ENCODE measurements at regions of chr12 and their contacts with region 1.

Region 1: DNA sequence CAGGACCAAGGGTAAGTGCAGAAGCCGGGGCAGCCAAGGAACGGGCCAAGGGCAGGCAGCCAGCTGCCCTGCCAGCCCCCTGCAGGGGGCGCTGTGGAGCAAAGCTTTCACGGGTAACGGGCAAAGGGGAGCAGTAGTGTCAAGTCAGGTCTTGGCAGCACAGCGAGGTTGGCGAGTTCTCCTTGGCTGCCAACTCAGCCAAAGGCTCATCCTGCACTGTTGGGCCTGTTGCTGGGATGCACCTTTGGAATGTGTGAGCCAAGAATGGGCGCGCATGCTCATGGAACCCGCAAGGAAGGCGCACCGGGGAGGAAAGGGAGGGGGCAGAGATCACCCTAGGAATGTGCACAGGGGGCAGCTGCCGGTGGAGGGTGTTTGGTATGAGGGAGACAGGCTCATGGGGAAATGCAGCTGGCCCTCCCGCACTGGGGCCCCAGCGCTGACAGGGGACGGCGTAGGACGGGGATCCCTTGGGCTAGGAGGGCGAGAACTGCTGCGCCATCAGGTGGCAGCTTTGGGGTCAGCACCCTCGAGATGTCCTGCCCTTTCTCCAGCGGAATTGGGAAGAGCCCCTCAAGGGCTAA is 138.0 kb downstream of the ASCL4 start:
- DNase-seq: peak; percentile 55 to 73
- ATAC-seq: peak; percentile 75 to 93
- H3K4me3 ChIP-seq: peak overlapping the region; percentile 41
- H3K27ac ChIP-seq: no peak overlapping the region
- H3K4me1 ChIP-seq: no peaks in the 10 kb centered on the region
- CTCF ChIP-seq: peak; percentile 70
- EP300 ChIP-seq: no peak
- POLR2A ChIP-seq: no peak
- RAD21 ChIP-seq: peak in 1 of 2 experiments; percentile 11; a peak in 1 of 5 replicates

Region 2: DNA sequence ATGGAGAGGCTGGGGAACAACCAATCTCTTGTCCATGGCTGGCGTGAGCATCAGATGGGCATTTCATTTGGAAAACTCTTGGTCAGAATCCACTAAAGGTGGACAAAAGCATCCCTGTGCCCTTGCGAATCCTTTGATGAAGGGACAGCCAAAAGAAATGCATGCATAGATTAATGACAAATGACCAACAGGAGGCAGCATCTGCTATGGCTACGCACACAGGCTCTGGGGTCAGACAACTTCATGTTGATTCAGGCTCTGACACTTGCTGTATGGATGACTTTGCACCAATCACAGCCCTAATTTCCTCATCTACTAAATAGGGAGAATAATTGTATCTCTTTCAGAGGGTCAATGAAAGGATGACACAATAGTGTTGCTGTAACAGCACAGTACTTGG is 20.5 kb before region 1 on chr12:
- CTCF ChIA-PET with region 1: interaction called, 16 read pairs
- POLR2A ChIA-PET with region 1: no interaction called
- DNase-seq: peak in 1 of 2 experiments; percentile 24
- ATAC-seq: peak in 1 of 2 experiments; percentile 56; a peak in 3 of 6 replicates
- H3K4me3 ChIP-seq: no peak overlapping the region
- H3K27ac ChIP-seq: no peak overlapping the region
- H3K4me1 ChIP-seq: no peaks in the 10 kb centered on the region
- CTCF ChIP-seq: no peak; the same call in 2 of the 3 replicates
- EP300 ChIP-seq: no peak
- POLR2A ChIP-seq: no peak
- RAD21 ChIP-seq: no peak

Region 3: DNA sequence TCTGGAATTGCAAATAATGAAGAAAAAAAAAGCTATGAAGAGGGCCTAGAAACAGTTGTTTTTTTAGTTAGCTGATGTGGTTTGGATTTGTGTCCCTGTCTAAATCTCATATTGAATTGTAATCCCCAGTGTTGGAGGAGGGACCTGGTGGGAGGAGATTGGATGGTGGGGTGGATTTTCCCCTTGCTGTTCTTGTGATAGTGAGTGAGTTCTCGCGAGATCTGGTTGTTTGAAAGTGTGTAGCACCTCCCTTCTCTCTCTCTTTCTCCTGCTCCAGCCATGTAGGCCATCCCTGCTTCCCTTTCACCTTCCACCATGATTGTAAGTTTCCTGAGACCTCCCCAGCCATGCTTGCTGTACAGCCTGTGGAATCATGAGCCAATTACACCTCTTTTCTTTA is 11.9 kb before region 1 on chr12:
- CTCF ChIA-PET with region 1: interaction called, 16 read pairs
- POLR2A ChIA-PET with region 1: no interaction called
- DNase-seq: no peak
- ATAC-seq: no peak
- H3K4me3 ChIP-seq: no peak overlapping the region
- H3K27ac ChIP-seq: no peak overlapping the region
- H3K4me1 ChIP-seq: 0 out of 3 replicates have a peak, but pooled peaks cover 3% of the 10 kb centered on the region
- CTCF ChIP-seq: no peak
- EP300 ChIP-seq: no peak
- POLR2A ChIP-seq: no peak
- RAD21 ChIP-seq: no peak

Region 4: GRCh38 chr12:107929436-107929835 is 16.9 kb after region 1 on chr12:
- CTCF ChIA-PET with region 1: interaction called, 44 read pairs
- POLR2A ChIA-PET with region 1: no interaction called
- DNase-seq: peak; percentile 35 to 80
- ATAC-seq: peak; percentile 83 to 97
- H3K4me3 ChIP-seq: no peak overlapping the region
- H3K27ac ChIP-seq: no peak overlapping the region
- H3K4me1 ChIP-seq: no peaks in the 10 kb centered on the region
- CTCF ChIP-seq: peak; percentile 41
- EP300 ChIP-seq: no peak
- POLR2A ChIP-seq: no peak
- RAD21 ChIP-seq: peak; percentile 35 to 54; a peak in 3 of 5 replicates

Region 5: DNA sequence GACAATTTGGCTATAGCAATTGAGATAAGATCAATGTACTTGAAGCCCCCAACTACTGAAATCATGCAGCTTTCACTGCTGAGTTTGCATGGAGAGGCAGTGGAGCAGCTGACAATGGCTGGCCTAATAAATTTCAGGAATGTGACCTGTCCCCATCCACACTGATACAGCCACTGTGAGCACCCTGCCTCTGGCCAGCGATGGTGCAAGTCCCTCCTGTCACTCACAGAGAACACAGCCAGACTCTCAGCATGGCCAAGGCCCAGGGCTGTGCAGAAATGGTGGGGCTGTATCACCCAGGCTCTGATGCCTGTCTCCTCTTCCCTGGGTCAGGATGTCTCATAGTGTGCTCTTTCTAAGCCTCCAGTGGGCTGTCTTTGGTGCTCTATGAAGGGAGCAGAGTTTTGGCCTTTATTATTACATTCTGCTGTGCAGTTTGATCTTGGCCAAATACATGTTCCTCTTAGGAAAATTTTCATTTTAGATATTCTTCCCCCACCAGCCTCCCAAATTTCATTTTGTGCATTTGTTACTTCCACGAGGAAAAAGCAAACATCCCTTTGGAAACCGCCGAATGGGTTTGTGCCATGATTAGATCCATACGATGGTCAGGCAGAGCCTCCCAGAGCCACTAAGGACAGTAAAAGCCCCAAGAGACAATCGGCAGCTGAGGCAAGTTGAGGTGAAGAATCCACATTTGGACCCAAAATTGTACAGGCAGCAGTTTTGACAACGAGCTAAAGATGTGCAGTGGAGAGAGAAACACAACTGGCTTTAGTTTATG is 131.4 kb after region 1 on chr12:
- CTCF ChIA-PET with region 1: no interaction called
- POLR2A ChIA-PET with region 1: no interaction called
- DNase-seq: no peak
- ATAC-seq: no peak
- H3K4me3 ChIP-seq: no peak overlapping the region
- H3K27ac ChIP-seq: no peak overlapping the region
- H3K4me1 ChIP-seq: no peaks in the 10 kb centered on the region
- CTCF ChIP-seq: no peak
- EP300 ChIP-seq: no peak
- POLR2A ChIP-seq: no peak
- RAD21 ChIP-seq: no peak

Measured in A549 (cell line).